Activated CD4-positive, alpha-beta T cell treated with anti-CD3 and anti-CD28 coated beads for 36 hours (primary cell): ENCODE measurements at regions of chr15 and their contacts with region 1.

Region 1: GRCh38 chr15:64731012-64731806 is 44.2 kb downstream of the RBPMS2 start:
- DNase-seq: peak; percentile 93
- ATAC-seq: peak; percentile 84
- H3K4me3 Mint-ChIP-seq: no peak overlapping the region
- H3K27ac Mint-ChIP-seq: no peak overlapping the region
- H3K4me1 Mint-ChIP-seq: peaks cover 4% of the 10 kb centered on the region
- H3K27me3 Mint-ChIP-seq: peaks cover 2% of the 10 kb centered on the region

Region 2: DNA sequence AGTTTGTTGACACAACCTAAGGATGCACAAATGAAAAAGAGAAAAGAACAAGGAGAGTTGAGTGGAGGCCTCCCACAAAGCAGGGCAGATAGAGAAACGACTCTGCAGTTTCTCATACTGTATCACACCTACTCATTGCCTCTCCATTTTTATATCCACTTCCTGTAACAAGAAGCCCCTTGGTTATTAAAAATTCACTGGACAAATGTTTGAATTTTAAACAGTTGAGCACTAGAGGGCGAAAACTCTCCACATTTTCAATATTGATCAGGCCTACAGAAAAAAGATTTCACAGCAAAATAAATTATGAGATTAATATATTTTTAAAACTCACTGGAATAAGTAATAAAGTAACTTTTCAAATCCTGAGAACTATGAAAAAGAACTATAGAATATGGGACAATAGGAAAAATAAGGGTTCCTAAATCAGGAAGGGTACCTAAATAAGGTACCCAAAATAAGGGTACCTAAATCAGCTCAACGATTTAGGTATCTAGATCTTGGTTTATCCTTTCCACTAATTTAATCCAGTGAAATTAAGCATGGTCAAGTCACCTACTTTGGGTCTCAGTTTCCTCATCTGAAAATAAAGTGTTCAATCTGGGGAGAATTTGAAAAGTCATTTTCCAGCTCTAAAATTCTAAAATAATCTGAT is 521.4 kb before region 1 on chr15:
- CTCF ChIA-PET with region 1: interaction called, 3 read pairs
- POLR2A ChIA-PET with region 1: no interaction called
- intact Hi-C with region 1: loop called in 1 of 2 experiments (anchors 2 kb)
- DNase-seq: no peak
- ATAC-seq: peak; percentile 60
- H3K4me3 Mint-ChIP-seq: no peak overlapping the region
- H3K27ac Mint-ChIP-seq: no peak overlapping the region
- H3K4me1 Mint-ChIP-seq: peaks cover 7% of the 10 kb centered on the region
- H3K27me3 Mint-ChIP-seq: no peaks in the 10 kb centered on the region

Region 3: DNA sequence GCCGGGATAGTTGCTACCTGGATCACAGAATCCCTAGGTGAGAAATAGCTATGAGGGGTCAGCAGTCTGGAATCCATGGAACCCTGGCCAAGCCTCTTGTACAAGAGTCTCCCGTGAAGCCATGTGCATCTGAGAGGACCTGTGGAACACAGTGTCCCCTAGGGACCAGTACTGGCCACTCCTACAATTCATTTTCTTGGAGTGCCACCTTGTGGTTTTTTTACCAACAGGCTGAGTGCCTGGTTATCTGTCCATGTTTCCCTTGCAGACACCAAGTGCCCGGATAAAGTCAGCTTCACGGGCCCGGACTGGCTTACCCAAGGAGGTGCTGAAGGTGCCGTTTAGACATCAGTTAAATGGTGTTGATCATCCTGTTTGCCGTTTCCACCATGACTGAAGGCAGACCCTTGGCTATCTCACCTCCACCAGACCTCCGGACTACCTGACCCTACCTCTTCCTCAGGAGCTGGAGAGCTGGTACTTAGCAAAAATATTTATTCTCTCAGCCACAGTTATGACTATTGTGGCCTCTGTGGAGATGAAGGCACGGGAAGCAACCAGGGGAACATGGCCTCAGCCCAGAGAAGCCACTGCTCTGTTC is 49.7 kb before region 1 on chr15:
- CTCF ChIA-PET with region 1: interaction called, 169 read pairs
- POLR2A ChIA-PET with region 1: no interaction called
- intact Hi-C with region 1: loop called (anchors 1 kb)
- DNase-seq: peak; percentile 16
- ATAC-seq: peak; percentile 60
- H3K4me3 Mint-ChIP-seq: no peak overlapping the region
- H3K27ac Mint-ChIP-seq: no peak overlapping the region
- H3K4me1 Mint-ChIP-seq: no peaks in the 10 kb centered on the region
- H3K27me3 Mint-ChIP-seq: no peaks in the 10 kb centered on the region

Region 4: DNA sequence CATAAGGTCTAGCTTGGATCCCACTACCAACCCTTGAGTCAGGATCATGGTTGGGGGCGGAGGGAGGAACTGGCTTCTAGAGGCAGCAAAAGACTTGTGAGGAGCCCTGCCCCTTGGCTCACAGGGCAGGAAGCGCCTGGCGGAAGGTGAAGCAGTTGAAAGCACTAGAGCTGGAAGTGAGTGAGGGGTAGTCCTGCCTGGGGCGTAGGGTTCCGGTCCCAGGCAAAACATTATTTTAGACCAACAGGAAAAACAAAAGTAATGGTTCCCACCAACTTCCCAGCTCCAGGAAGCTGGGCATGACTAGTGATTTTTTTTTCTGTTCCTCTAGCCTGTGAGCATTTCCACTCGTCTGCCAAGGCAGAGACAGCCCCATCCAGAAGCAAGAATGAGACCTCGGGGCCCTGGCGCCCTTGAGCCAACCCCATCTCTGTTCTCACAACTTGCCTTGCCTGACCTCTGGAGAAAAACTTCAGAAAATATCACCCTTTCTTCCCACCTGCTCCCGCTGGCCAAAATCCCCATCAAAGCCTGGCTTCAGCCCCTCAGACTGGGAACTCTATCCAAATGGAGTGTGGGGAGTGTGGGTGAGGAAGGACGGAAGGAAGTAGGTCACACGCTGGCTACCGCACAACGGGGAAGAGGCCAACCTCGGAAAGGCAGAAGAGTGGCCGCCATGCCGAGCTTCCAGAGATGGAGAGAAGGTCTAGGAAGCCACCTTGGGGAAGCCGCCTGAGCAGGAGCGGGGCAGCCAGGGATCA is 13.3 kb before region 1 on chr15:
- CTCF ChIA-PET with region 1: interaction called, 20 read pairs
- POLR2A ChIA-PET with region 1: no interaction called
- intact Hi-C with region 1: no loop called
- DNase-seq: peak; percentile 28
- ATAC-seq: peak; percentile 51
- H3K4me3 Mint-ChIP-seq: no peak overlapping the region
- H3K27ac Mint-ChIP-seq: peak overlapping the region; percentile 33
- H3K4me1 Mint-ChIP-seq: peaks cover 19% of the 10 kb centered on the region
- H3K27me3 Mint-ChIP-seq: no peaks in the 10 kb centered on the region

Region 5: GRCh38 chr15:64905119-64905831 is 174.1 kb after region 1 on chr15:
- CTCF ChIA-PET with region 1: interaction called, 3 read pairs
- POLR2A ChIA-PET with region 1: no interaction called
- intact Hi-C with region 1: loop called (anchors 1 kb)
- DNase-seq: peak; percentile 91
- ATAC-seq: peak; percentile 87
- H3K4me3 Mint-ChIP-seq: peak overlapping the region; percentile 67
- H3K27ac Mint-ChIP-seq: peak overlapping the region; percentile 87
- H3K4me1 Mint-ChIP-seq: peaks cover 34% of the 10 kb centered on the region
- H3K27me3 Mint-ChIP-seq: peaks cover 6% of the 10 kb centered on the region

Region 6: GRCh38 chr15:65101411-65101890 is 370.2 kb after region 1 on chr15:
- CTCF ChIA-PET with region 1: no interaction called
- POLR2A ChIA-PET with region 1: no interaction called
- intact Hi-C with region 1: loop called in 1 of 2 experiments (anchors 5 kb)
- DNase-seq: peak; percentile 82
- ATAC-seq: peak; percentile 69
- H3K4me3 Mint-ChIP-seq: no peak overlapping the region
- H3K27ac Mint-ChIP-seq: no peak overlapping the region
- H3K4me1 Mint-ChIP-seq: peaks cover 2% of the 10 kb centered on the region
- H3K27me3 Mint-ChIP-seq: no peaks in the 10 kb centered on the region